ENCODE measurements at regions of chr9 and their contacts with region 1.

Region 1: GRCh38 chr9:117403403-117403811 is 11.4 kb downstream of the ASTN2 start:
- DNase-seq: peak in 1 of 2 donors; percentile 54
- ATAC-seq: no peak
- H3K4me3 ChIP-seq: no peak overlapping the region
- H3K27ac ChIP-seq: no peak overlapping the region
- H3K4me1 ChIP-seq: no peaks in the 10 kb centered on the region
- H3K27me3 ChIP-seq: no peaks in the 10 kb centered on the region

Region 2: DNA sequence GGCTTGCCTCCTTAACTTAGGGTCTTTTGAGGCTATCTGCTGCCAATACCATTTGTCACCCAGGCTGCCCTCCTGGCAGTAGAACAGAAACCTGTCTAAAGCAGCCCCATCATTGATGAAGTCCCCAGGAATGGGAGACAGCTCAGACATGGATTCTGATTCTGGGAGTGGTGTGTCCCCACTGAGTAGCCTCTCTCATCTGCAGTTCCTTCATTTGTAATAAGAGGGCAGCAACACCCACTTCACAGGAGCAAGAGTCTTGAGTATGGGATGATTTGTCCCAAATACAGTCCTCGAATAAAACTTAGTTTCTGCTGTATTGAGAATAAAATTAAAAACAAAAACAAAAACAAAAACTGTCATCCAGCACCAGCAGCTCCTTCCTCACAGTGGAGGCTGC is 156.1 kb before region 1 on chr9:
- intact Hi-C with region 1: loop called in 1 of 2 experiments (anchors 10 kb)
- DNase-seq: no peak
- ATAC-seq: peak; percentile 73
- H3K4me3 ChIP-seq: no peak overlapping the region
- H3K27ac ChIP-seq: no peak overlapping the region
- H3K4me1 ChIP-seq: no peaks in the 10 kb centered on the region
- H3K27me3 ChIP-seq: no peaks in the 10 kb centered on the region